ENCODE measurements at regions of chr19 and their contacts with region 1.

Region 1: DNA sequence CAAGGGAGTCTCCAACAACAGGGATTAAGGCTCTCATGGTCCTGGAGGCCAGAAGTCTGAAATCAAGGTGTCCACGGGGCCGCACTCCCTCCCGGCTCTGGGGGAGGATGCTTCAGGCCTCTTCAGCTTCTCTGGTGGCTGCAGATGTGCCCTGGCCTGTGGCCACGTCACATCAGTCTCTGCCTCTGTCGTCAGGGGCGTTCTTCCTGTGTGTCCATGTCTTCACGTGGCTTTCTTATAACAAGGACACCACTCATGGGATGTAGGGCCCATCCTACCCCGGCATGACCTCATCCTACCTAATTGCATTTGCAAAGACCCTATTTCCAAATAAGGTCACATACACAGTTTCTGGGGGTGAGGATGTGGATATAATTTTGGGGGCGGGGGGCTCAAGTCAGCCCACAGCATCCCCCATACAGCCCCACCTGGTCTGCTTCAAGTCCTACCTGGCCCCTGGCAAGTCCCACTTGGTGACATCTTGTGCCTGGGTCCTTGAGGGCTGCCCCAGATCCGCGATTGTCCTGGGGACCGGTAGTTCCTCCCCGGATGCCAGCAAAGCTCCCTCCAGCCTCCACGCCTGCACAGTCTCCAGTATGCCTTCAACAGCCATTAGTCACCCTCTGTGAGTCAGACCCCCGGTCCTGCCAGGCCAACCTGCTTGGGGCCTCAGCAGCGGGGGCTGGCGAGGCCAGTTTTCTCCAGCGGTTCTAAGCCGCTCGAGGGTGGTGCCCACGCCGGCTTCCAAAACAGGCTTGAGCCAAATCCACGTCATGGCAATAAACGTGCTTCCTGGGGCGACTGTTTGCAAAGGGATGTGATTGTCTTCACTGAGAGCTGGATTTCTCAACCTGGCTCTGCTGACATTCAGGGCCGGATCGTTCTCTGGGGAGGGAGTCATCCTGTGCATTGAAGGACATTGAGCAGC is 32.2 kb downstream of the MYO9B start:
- DNase-seq: peak; percentile 96
- H3K4me3 ChIP-seq: no peak overlapping the region
- H3K27ac ChIP-seq: peak overlapping the region; percentile 80
- H3K4me1 ChIP-seq: peaks cover 11% of the 10 kb centered on the region
- H3K27me3 ChIP-seq: no peaks in the 10 kb centered on the region
- CTCF ChIP-seq: no peak
- POLR2A ChIP-seq: no peak

Region 2: GRCh38 chr19:17075035-17075863 is 32.5 kb before region 1 on chr19 and contains the starts of genes HAUS8 and MYO9B:
- CTCF ChIA-PET with region 1: interaction called, 10 read pairs
- POLR2A ChIA-PET with region 1: no interaction called
- dilution Hi-C with region 1: no loop called
- intact Hi-C with region 1: loop called (anchors 1 kb)
- DNase-seq: peak; percentile 99
- H3K4me3 ChIP-seq: peak within 1 kb of the TSS; percentile 80 to 90 (median 89)
- H3K27ac ChIP-seq: peak within 1 kb of the TSS; percentile 75
- H3K4me1 ChIP-seq: peaks cover 41% of the 10 kb centered on the region
- H3K27me3 ChIP-seq: no peaks in the 10 kb centered on the region
- CTCF ChIP-seq: no peak
- POLR2A ChIP-seq: peak; percentile 72
- total RNA-seq, gene HAUS8: 23.4 and 30.3 TPM in 2 replicates
- total RNA-seq, gene MYO9B: 119 and 124 TPM in 2 replicates

Region 3: DNA sequence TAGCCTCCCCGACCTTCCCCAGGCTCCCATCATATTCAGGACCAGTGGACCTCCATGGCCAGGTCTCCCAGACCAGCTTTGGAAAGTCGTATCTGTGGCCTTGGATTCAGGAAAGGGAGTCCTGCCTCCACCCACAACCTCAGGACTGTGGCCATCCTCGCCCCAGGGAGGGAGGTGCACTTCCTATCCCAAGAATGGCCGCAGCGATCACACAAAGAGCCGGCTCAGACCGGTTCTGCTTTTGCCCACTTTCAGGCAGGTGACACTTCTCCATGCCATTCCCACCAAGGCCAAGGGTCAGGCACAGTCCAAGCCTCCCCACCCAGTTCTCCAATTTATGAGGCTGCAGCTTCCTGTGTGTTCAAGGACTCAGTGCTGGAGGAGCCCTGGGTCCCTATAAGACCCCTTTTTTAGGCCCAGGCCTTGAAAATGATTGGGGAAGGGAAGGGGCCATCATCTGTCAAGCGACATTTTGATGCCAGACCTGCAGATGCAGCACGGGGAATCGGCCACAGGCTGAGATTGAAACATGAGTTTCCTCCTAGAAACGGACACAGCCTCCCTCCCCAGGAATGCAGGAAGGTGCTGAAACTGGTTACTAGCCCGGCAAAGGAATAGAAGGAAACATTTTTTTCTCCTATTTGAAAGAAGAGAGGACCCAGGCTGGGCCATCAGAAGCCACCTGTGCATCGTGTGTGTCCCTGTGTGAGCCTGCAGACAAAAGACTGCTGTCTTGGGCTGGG is 41.8 kb after region 1 on chr19:
- CTCF ChIA-PET with region 1: no interaction called
- POLR2A ChIA-PET with region 1: no interaction called
- dilution Hi-C with region 1: no loop called
- intact Hi-C with region 1: loop called (anchors 5 kb)
- DNase-seq: no peak
- H3K4me3 ChIP-seq: no peak overlapping the region
- H3K27ac ChIP-seq: no peak overlapping the region
- H3K4me1 ChIP-seq: no peaks in the 10 kb centered on the region
- H3K27me3 ChIP-seq: no peaks in the 10 kb centered on the region
- CTCF ChIP-seq: no peak
- POLR2A ChIP-seq: no peak

Region 4: GRCh38 chr19:17165712-17166111 is 57.9 kb after region 1 on chr19:
- CTCF ChIA-PET with region 1: no interaction called
- POLR2A ChIA-PET with region 1: no interaction called
- dilution Hi-C with region 1: no loop called
- intact Hi-C with region 1: loop called (anchors 1 kb)
- DNase-seq: no peak
- H3K4me3 ChIP-seq: no peak overlapping the region
- H3K27ac ChIP-seq: no peak overlapping the region
- H3K4me1 ChIP-seq: no peaks in the 10 kb centered on the region
- H3K27me3 ChIP-seq: no peaks in the 10 kb centered on the region
- CTCF ChIP-seq: no peak
- POLR2A ChIP-seq: no peak

Region 5: DNA sequence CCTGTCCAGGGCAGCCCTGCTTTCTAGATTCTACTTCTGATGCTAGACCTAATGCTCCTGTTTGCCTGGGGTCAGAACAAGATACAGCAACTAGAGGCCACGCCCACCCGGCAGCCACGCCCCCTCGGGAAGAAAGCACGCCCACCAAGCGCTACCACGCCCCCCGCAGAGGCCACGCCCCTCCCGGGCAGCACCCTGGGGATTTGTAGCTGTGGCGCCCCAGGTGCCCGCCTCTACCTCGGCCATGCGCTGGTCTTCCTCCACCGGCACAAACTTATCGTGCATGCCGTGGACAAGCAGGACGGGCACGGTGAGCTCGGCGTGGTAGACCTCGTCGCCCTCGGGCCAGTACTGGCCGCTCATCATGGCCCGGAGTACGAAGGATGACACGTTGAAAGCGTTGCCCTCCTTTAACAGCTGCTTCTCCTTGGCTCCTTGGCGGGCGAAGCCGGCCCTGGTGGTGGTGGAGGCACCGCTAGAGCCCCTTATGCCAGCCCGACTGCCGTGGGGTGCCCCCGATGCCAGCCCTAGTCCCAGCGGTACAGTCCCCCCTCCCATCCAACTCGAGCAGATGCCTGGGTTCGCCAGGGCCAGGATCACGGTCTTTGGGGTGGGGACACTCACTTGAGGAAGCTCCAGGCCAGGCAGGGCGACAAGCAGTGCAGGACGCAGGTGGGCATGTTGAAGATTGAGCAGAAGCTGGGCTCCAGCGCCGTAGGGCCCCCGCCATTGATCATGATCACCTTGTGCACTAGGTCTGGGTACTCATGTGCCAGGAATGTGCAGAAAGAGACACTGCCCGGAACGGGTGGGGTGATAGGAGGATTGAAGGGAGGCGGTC is 186.5 kb after region 1 on chr19:
- CTCF ChIA-PET with region 1: no interaction called
- POLR2A ChIA-PET with region 1: no interaction called
- dilution Hi-C with region 1: no loop called
- intact Hi-C with region 1: no loop called
- DNase-seq: no peak
- H3K4me3 ChIP-seq: no peak overlapping the region
- H3K27ac ChIP-seq: no peak overlapping the region
- H3K4me1 ChIP-seq: peaks cover 12% of the 10 kb centered on the region
- H3K27me3 ChIP-seq: no peaks in the 10 kb centered on the region
- CTCF ChIP-seq: no peak
- POLR2A ChIP-seq: no peak

Measured in endothelial cell of umbilical vein (primary cell).